Heart left ventricle (tissue), 16 donors: ENCODE measurements at regions of chr9 and their contacts with region 1.

Region 1: GRCh38 chr9:35293378-35293964 is 131.7 kb downstream of the UNC13B start:
- DNase-seq: no peak
- ATAC-seq: no peak
- H3K4me3 ChIP-seq: no peak overlapping the region
- H3K27ac ChIP-seq: no peak overlapping the region
- H3K4me1 ChIP-seq: peaks cover 0 to 7% (median 0%) of the 10 kb centered on the region in 12 donors
- H3K27me3 ChIP-seq: no peaks in the 10 kb centered on the region
- CTCF ChIP-seq: no peak
- POLR2A ChIP-seq: no peak

Region 2: DNA sequence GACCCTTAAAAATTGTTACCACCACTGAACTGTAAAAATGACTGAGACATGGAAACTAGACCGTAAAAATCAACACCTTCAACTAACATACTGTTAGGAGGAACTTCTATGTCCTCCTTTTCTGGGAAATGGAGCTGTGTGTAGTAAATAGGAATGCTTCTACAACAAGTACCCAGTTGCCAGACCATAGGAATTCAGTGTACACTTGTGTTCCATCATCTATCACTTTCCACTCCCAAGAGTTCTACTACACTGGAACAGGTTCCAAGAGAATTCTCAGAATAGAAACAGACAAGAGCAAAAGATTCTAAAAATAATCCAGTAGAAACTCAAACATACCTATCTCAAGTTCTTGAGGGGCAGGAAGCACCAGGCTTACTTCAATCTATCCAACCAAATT is 1268.4 kb before region 1 on chr9:
- intact Hi-C with region 1: no loop called
- DNase-seq: no peak
- ATAC-seq: peak; percentile 93 to 95 (median 95)
- H3K4me3 ChIP-seq: no peak overlapping the region
- H3K27ac ChIP-seq: peak overlapping the region in 11 of 12 donors; percentile 49 to 81 (median 72)
- H3K4me1 ChIP-seq: peaks cover 0 to 25% (median 4%) of the 10 kb centered on the region in 12 donors
- H3K27me3 ChIP-seq: no peaks in the 10 kb centered on the region
- CTCF ChIP-seq: no peak
- POLR2A ChIP-seq: no peak

Region 3: GRCh38 chr9:35211854-35212253 is 81.6 kb before region 1 on chr9:
- intact Hi-C with region 1: loop called in 1 of 10 experiments (anchors 10 kb)
- DNase-seq: no peak
- ATAC-seq: no peak
- H3K4me3 ChIP-seq: no peak overlapping the region
- H3K27ac ChIP-seq: no peak overlapping the region
- H3K4me1 ChIP-seq: peaks cover 0 to 15% (median 0%) of the 10 kb centered on the region in 12 donors
- H3K27me3 ChIP-seq: no peaks in the 10 kb centered on the region
- CTCF ChIP-seq: no peak
- POLR2A ChIP-seq: no peak

Region 4: GRCh38 chr9:35229066-35229778 is 64.2 kb before region 1 on chr9:
- intact Hi-C with region 1: loop called in 1 of 10 experiments (anchors 10 kb)
- DNase-seq: no peak
- ATAC-seq: no peak
- H3K4me3 ChIP-seq: no peak overlapping the region
- H3K27ac ChIP-seq: no peak overlapping the region
- H3K4me1 ChIP-seq: peaks cover 0 to 30% (median 15%) of the 10 kb centered on the region in 12 donors
- H3K27me3 ChIP-seq: no peaks in the 10 kb centered on the region
- CTCF ChIP-seq: no peak
- POLR2A ChIP-seq: no peak